Lower lobe of right lung (tissue), 2 donors: ENCODE measurements at regions of chr6 and their contacts with region 1.

Region 1: DNA sequence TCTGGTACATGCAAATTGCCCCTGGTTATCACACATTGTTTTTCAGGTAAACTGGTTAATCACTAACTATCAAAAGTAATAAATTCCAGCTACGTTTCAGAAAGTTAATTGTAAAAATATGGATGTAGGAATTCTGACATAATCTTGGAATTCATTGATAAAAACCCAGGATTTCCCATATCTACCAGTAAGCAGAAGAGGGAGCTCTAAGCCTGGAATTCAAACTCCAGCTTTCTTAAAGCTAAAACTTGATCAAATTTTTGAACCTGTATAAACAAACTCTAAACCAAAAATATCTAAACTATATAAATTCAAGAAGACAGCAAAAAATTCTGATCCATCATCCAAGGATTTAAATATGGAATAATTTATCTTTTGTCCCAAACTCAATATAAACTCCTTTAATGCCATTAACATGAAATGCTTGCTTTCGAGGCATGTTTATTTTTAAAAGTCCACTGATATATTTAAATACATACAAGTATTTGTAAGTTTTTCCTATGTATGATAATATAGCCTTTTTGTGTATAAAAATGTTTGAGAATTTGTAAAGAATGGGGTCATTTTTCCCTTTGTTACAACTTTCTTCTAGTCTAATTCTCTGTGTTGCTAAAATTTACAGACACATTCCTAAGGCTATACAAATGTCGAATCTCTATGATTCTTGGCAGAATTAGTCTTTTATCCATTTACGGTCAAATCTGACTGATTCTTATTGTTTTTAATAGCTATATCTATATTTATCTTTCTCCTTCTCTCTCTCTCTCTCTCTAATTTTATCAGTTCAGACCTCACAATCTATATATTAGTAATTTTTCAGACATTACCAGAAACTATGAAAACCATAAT is 91.4 kb upstream of the RNF217 start:
- DNase-seq: no peak
- ATAC-seq: no peak
- H3K4me3 ChIP-seq: no peak overlapping the region
- H3K27ac ChIP-seq: no peak overlapping the region
- H3K4me1 ChIP-seq: no peaks in the 10 kb centered on the region
- H3K27me3 ChIP-seq: no peaks in the 10 kb centered on the region
- CTCF ChIP-seq: peak; percentile 67

Region 2: DNA sequence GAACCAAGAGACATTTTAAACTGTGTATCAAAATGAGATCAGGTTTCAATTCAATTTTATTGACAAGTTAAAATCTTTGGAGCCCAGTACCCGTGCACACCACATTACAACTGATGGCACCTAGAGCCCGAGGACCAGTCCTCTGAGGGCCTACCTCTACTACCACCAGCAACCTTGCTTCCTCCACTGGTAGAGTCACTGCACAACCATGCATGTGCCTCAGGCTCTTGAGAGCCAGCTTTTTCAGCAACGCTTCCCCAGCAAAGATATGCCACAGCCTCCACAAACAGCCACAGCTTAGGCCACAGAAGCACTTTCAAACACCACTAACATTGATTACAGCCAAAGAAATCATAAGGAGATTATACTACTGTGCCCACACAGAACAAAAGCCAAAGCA is 237.2 kb before region 1 on chr6:
- intact Hi-C with region 1: no loop called
- DNase-seq: no peak
- ATAC-seq: no peak
- H3K4me3 ChIP-seq: no peak overlapping the region
- H3K27ac ChIP-seq: no peak overlapping the region
- H3K4me1 ChIP-seq: no peaks in the 10 kb centered on the region
- H3K27me3 ChIP-seq: no peaks in the 10 kb centered on the region
- CTCF ChIP-seq: no peak

Region 3: GRCh38 chr6:124812067-124812466 is 58.8 kb before region 1 on chr6:
- intact Hi-C with region 1: no loop called
- DNase-seq: no peak
- ATAC-seq: no peak
- H3K4me3 ChIP-seq: no peak overlapping the region
- H3K27ac ChIP-seq: no peak overlapping the region
- H3K4me1 ChIP-seq: no peaks in the 10 kb centered on the region
- H3K27me3 ChIP-seq: no peaks in the 10 kb centered on the region
- CTCF ChIP-seq: no peak

Region 4: DNA sequence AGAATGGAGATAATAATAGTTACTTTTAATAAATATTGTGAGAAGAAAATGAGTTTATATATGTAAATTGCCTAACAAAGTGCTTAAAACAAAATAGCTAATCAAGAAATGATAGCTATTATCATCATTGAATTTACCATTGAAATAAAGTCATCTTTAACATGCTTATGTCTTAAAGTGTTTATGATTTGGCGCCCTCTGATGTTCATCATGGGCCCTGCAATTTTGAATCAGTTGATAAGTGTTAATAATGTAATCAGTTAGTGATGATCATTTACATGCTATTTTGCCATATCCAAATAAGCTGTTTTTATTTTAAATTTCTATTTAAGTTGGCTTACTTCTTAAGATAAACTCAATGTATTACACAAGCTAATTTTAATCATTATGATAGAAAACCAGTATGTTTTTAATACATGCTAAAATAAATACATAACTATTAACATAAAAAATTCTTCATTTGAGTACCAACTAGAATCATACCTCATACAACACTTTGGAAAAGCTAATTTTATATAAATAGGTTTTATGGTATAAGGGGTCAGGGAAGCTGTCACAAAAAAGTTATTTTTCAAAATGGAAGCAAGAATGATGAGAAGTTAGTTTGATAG is 243.5 kb after region 1 on chr6:
- intact Hi-C with region 1: loop called (anchors 5 kb)
- DNase-seq: no peak
- ATAC-seq: no peak
- H3K4me3 ChIP-seq: no peak overlapping the region
- H3K27ac ChIP-seq: no peak overlapping the region
- H3K4me1 ChIP-seq: no peaks in the 10 kb centered on the region
- H3K27me3 ChIP-seq: no peaks in the 10 kb centered on the region
- CTCF ChIP-seq: peak; percentile 81